Activated CD4-positive, alpha-beta memory T cell treated with anti-CD3 and anti-CD28 coated beads, Interleukin-2, amount 10 ng/mL, durations not matched to agents 7 days and 5 days (primary cell): ENCODE measurements at regions of chr12 and their contacts with region 1.

Region 1: DNA sequence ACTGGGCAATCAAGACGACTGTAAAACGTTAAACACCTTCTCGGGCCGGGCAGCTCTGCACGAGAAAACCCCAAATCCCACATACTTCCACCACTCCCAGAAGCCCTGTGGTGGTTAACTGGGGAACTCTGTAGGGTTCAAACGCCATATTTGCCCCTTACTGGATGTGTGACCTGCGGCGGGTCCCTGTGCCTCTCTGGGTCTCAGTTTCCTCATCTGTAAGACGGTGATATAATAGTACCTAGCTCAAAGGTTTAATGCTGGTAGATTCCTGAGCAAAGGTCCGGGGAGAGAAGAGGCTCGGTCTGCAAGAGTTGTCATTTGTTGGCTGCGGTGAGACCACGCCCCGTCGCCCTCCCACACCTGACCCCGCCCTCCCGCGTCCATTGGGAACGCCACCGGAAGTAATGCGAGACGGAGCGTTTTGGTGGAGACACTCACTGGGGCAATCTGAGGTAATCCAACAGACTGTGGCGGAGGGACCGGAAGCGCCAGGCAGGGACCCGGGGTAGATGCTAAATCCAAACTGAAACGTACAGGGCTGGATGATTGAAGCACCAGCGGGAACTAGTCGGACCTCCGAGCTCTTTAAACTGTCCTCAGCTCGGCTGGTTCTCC is 661 bp upstream of the OGFOD2 start:
- DNase-seq: peak; percentile 99
- H3K4me3 Mint-ChIP-seq: peak overlapping the region; percentile 97
- H3K27ac Mint-ChIP-seq: peak overlapping the region; percentile 98
- H3K4me1 Mint-ChIP-seq: peaks cover 34% of the 10 kb centered on the region
- H3K27me3 Mint-ChIP-seq: no peaks in the 10 kb centered on the region

Region 2: DNA sequence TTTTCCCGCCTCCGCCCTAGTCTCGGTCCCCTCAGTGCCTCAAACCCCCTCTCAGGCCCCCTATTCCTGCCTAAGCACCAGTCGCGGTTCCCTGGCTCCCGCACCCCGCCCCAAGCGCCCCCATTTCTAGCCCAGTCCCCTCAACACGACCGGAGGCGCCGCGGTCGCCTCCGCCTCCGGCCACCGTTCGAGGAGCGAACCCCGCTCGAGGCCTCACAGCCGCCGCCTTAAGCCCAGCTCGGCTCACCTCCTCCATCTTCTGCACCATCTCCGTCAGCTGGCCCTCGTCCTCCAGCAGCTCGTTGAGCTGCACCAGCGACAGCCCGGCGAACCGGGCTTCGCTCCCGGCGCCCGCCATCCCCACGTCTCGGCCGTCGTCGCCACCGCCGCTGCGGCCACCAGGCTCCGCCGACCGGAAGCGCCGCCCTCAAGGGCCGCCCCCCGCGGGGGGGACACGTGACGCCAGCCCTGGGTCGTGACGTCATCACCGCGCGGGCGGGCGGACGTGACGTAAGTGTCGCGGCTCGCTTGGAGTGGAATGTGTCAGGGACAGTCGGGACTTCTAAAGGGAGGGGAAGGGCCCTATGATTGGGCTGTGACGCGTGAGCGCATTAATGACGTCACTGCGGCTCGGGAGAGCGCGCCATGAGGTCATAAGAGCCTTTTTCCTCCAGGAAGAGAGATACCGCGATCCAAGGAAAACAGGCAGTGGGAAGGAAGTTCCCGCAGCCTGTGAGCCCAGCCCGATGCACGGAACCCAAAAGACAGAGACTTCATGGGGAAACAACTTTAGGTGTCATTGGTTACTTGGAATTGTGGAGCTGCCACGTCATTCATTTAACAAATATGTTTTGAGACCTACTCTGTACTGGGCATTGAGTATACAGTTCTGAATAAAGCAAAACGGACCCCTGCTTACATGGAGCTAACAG is 78.4 kb before region 1 on chr12 and contains the start of gene VPS37B:
- CTCF ChIA-PET with region 1: no interaction called
- POLR2A ChIA-PET with region 1: interaction called, 11 read pairs
- DNase-seq: peak; percentile 92
- H3K4me3 Mint-ChIP-seq: peak within 1 kb of the TSS; percentile 83
- H3K27ac Mint-ChIP-seq: peak within 1 kb of the TSS; percentile 70
- H3K4me1 Mint-ChIP-seq: peaks cover 86% of the 10 kb centered on the region
- H3K27me3 Mint-ChIP-seq: no peaks in the 10 kb centered on the region
- total RNA-seq, gene VPS37B: 27.1 to 27.7 TPM

Region 3: DNA sequence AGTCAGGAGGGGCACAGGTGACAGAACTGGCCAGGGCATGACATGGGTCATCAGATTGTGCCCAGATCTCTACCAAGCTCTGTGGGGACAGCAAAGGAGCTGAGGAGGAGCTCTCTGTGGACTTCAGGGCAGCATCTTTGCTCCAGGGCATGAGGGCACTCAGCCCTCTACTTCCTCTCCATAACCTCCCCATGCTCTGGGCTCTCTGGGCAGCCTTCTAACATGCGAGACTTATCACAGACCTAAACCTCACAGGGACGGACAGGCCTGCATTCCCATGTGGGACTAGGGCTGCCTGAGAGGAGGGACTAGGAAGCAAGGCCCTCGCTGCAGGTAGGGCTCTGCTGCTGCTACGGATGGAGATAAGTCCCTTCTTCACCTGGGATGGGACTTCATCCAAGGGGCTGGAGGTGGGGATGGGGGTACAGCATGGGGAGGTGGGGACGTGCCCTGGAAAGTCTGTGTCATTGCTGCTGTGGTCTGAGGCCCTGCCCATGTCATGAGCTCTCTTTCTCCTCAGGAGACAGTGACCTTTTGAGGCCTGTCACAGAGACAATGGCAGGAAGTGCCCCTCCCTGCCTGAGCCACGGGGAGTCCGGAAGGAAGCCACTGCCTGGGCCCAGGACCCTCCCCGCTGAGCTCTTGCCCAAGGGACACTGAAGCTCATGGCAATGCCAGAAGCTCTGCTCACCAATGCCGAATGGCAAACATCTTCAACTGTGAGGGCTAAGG is 132.4 kb after region 1 on chr12:
- CTCF ChIA-PET with region 1: no interaction called
- POLR2A ChIA-PET with region 1: interaction called, 10 read pairs
- DNase-seq: peak; percentile 85
- H3K4me3 Mint-ChIP-seq: peak overlapping the region; percentile 37
- H3K27ac Mint-ChIP-seq: peak overlapping the region; percentile 93
- H3K4me1 Mint-ChIP-seq: peaks cover 39% of the 10 kb centered on the region
- H3K27me3 Mint-ChIP-seq: no peaks in the 10 kb centered on the region